Gastrocnemius medialis (tissue), 4 donors: ENCODE measurements at regions of chr1 and their contacts with region 1.

Region 1: DNA sequence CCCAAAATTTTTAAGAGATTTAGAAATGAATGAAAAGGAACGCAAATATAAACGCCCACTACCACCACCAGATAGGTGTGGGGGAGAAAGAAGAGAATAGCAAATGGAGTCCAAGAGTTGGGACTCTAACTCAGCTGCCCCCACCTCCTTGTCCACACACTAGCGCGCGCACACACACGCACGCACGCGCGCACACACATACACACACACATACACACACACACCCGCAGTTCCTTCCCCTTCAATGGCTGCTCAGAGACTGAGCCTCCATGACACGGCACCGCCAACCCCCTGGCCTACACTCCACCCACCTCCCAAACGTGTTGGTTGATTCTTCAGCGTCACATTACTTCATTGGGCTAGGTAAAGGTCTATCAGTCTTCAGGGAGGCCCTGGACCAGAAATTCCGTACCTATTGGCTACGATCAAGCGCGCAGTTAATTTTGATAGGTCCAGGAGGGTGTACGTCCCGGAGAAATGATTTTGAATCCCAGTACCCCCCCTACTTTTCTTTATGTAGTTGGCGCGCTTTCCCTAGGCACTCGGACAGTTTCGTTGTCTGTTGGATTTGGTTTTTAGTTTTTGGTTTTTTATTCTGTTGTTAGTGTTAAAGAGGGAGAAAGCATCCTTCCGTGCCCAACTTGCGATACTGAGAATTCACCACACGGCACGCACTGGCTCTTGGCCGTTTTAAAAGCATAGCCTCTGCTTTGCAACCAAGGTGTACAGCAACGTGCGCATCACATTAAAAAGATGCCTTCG is at the start of gene ANP32E:
- DNase-seq: peak; percentile 97 to 98
- ATAC-seq: peak; percentile 96 to 98
- H3K4me3 ChIP-seq: peak within 1 kb of the TSS; percentile 83 to 89 (median 86)
- H3K27ac ChIP-seq: peak within 1 kb of the TSS; percentile 95 to 99 (median 98)
- H3K4me1 ChIP-seq: peaks cover 4 to 13% of the 10 kb centered on the region in 2 donors
- H3K27me3 ChIP-seq: no peaks in the 10 kb centered on the region
- CTCF ChIP-seq: peak in 4 of 5 experiments; percentile 10 to 25 (median 16)
- POLR2A ChIP-seq: peak; percentile 74 to 89
- total RNA-seq, gene ANP32E: 15.1 to 44.9 (median 24.9) TPM

Region 2: GRCh38 chr1:150056407-150056806 is 179.6 kb before region 1 on chr1:
- in situ Hi-C with region 1: no loop called
- intact Hi-C with region 1: no loop called
- DNase-seq: no peak
- ATAC-seq: no peak
- H3K4me3 ChIP-seq: no peak overlapping the region
- H3K27ac ChIP-seq: no peak overlapping the region
- H3K4me1 ChIP-seq: peaks cover 0 to 4% of the 10 kb centered on the region in 2 donors
- H3K27me3 ChIP-seq: no peaks in the 10 kb centered on the region
- CTCF ChIP-seq: no peak
- POLR2A ChIP-seq: no peak

Region 3: DNA sequence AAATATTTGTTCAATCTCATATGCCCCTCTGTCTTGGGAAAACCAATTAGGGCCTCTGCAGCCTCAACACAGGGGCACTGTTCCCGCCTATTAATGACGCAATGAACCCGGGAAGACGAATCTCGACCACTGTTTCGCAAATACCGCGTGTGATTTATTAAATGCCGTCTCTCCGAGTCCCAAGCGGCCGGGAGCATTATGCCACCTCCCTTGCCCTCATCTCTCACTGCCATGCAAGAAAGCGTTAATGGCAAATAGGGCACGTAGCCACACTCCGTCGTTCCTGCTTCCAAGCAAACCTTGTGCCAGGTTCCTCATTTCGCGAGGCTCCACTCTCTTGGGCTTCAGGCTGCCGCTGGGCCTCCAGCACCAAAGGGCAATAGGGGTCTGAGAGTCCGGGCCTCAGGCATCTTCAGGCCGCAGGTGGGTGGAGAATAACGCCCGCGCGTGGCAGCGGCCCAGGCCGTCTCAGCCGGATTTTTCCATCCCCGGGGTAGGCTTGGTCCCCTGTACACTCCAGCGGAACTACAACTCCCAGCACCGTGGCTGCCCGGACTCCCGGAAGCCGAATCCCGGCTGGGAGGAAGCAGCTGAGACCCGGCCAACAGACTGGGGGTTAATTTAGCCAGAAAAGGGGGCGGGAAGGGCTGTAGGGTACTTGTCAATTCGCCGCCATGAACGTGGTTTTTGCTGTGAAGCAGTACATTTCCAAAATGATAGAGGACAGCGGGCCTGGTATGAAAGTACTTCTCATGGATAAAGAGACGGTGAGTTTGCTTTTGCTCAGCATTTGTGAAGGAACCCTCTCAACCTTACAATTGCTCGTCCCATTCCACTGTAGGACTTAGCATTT is 168.6 kb before region 1 on chr1 and contains the start of gene VPS45:
- in situ Hi-C with region 1: no loop called
- intact Hi-C with region 1: loop called (anchors 5 kb)
- DNase-seq: peak; percentile 85 to 91
- ATAC-seq: peak; percentile 94
- H3K4me3 ChIP-seq: peak within 1 kb of the TSS; percentile 72 to 91 (median 79)
- H3K27ac ChIP-seq: peak within 1 kb of the TSS; percentile 83 to 94 (median 89)
- H3K4me1 ChIP-seq: peaks cover 26% of the 10 kb centered on the region in 2 donors
- H3K27me3 ChIP-seq: no peaks in the 10 kb centered on the region
- CTCF ChIP-seq: peak in 2 of 5 experiments; percentile 9 to 34
- POLR2A ChIP-seq: peak; percentile 29 to 33
- total RNA-seq, gene VPS45: 17.0 to 30.3 (median 24.7) TPM

Region 4: DNA sequence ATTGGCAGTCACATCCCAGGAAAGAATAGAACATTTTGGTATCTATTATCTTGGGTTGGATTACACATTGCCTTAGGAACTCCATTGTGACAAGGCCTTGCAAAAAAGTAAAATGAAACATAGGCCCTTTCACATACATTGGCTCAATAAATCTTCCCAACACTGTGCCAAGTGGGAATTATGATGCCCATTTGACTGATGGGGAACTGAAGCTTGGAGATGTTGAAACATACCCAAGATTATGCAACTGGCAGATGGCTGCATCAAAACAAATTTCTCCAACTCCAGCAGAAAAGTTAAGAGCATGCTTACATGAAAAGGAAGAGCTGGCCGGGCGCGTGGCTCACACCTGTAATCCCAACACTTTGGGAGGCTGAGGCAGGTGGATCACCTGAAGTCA is 59.4 kb before region 1 on chr1:
- in situ Hi-C with region 1: no loop called
- intact Hi-C with region 1: no loop called
- DNase-seq: no peak
- ATAC-seq: no peak
- H3K4me3 ChIP-seq: no peak overlapping the region
- H3K27ac ChIP-seq: no peak overlapping the region
- H3K4me1 ChIP-seq: no peaks in the 10 kb centered on the region
- H3K27me3 ChIP-seq: no peaks in the 10 kb centered on the region
- CTCF ChIP-seq: no peak
- POLR2A ChIP-seq: no peak

Region 5: GRCh38 chr1:150213170-150214098 is 22.6 kb before region 1 on chr1:
- in situ Hi-C with region 1: no loop called
- intact Hi-C with region 1: loop called (anchors 1 kb)
- DNase-seq: peak; percentile 93 to 97
- ATAC-seq: peak; percentile 99 to 100
- H3K4me3 ChIP-seq: peak overlapping the region; percentile 59 to 68 (median 67)
- H3K27ac ChIP-seq: peak overlapping the region; percentile 75 to 88 (median 86)
- H3K4me1 ChIP-seq: peaks cover 5 to 10% of the 10 kb centered on the region in 2 donors
- H3K27me3 ChIP-seq: no peaks in the 10 kb centered on the region
- CTCF ChIP-seq: peak in 2 of 5 experiments; percentile 13 to 26
- POLR2A ChIP-seq: peak; percentile 18 to 49

Region 6: DNA sequence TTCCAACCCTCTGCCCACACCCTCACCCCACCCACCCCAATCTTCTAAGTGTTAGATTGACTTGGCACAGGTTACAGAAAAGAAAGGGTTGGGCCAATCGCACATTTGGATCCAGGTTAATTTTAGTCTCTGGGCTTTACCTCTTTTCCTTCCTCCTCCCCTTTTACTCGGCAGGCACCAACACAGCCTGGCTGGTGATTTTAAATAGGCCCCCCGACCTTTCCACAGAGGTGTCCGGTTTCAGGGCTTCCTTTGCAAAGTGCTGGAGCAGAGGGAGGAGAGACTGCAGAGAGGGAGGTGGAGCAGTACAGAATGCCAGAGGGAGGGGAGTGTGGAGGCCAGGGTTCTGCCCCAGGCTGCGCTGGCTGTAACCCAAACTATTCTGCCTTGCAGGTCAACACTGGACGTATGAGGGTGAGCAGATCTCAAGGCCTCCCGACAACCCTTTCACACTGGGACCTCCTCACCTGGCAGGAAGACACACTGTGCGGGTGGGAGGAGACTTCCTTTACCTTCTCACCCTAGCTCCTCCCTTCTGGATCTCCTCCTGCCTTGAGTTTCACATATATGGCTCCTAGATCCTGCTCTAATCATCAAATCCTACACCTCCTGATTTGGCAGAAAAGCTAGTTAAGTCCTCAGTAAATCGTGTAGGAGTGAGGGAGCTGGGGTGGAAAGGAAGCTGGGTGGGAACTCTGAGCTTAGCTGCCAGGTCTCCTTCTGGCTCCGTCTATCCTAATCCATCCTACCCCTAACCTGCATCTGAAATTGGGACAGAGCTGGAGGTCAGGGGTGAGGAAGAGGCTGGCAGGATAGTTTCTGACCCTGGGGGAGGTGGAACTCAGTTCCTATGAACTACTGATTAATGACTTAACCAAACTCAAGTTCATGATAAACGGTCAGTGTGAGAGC is 24.0 kb after region 1 on chr1:
- in situ Hi-C with region 1: no loop called
- intact Hi-C with region 1: loop called (anchors 2 kb)
- DNase-seq: peak in 1 of 2 donors; percentile 24
- ATAC-seq: peak in 1 of 2 donors; percentile 5
- H3K4me3 ChIP-seq: peak overlapping the region in 1 of 4 donors; percentile 5
- H3K27ac ChIP-seq: peak overlapping the region; percentile 22 to 76 (median 66)
- H3K4me1 ChIP-seq: peaks cover 32 to 48% of the 10 kb centered on the region in 2 donors
- H3K27me3 ChIP-seq: no peaks in the 10 kb centered on the region
- CTCF ChIP-seq: no peak
- POLR2A ChIP-seq: no peak

Region 7: GRCh38 chr1:150268705-150269403 is 32.8 kb after region 1 on chr1 and contains the start of gene APH1A:
- in situ Hi-C with region 1: no loop called
- intact Hi-C with region 1: loop called (anchors 1 kb)
- DNase-seq: peak; percentile 97 to 98
- ATAC-seq: peak; percentile 95 to 96
- H3K4me3 ChIP-seq: peak within 1 kb of the TSS; percentile 69 to 99 (median 94)
- H3K27ac ChIP-seq: peak within 1 kb of the TSS; percentile 94 to 99 (median 98)
- H3K4me1 ChIP-seq: peaks cover 10 to 40% of the 10 kb centered on the region in 2 donors
- H3K27me3 ChIP-seq: no peaks in the 10 kb centered on the region
- CTCF ChIP-seq: no peak
- POLR2A ChIP-seq: peak; percentile 76 to 83
- total RNA-seq, gene APH1A: 41.2 to 63.8 (median 54.9) TPM

Region 8: GRCh38 chr1:150281837-150282653 is 46.0 kb after region 1 on chr1 and contains the start of gene CIART:
- in situ Hi-C with region 1: no loop called
- intact Hi-C with region 1: loop called (anchors 1 kb)
- DNase-seq: peak; percentile 97 to 99
- ATAC-seq: peak; percentile 88 to 91
- H3K4me3 ChIP-seq: peak within 1 kb of the TSS; percentile 59 to 80 (median 72)
- H3K27ac ChIP-seq: peak within 1 kb of the TSS; percentile 93 to 97 (median 95)
- H3K4me1 ChIP-seq: peaks cover 27 to 34% of the 10 kb centered on the region in 2 donors
- H3K27me3 ChIP-seq: no peaks in the 10 kb centered on the region
- CTCF ChIP-seq: no peak
- POLR2A ChIP-seq: peak; percentile 67 to 77
- total RNA-seq, gene CIART: 8.2 to 15.8 (median 11.7) TPM

Region 9: GRCh38 chr1:150363426-150364230 is 127.6 kb after region 1 on chr1 and contains the start of gene RPRD2:
- in situ Hi-C with region 1: no loop called
- intact Hi-C with region 1: loop called (anchors 5 kb)
- DNase-seq: peak; percentile 100
- ATAC-seq: peak; percentile 91 to 93
- H3K4me3 ChIP-seq: peak within 1 kb of the TSS; percentile 82 to 93 (median 84)
- H3K27ac ChIP-seq: peak within 1 kb of the TSS; percentile 93 to 97 (median 96)
- H3K4me1 ChIP-seq: peaks cover 23% of the 10 kb centered on the region in 2 donors
- H3K27me3 ChIP-seq: no peaks in the 10 kb centered on the region
- CTCF ChIP-seq: peak in 1 of 5 experiments; percentile 14
- POLR2A ChIP-seq: peak; percentile 51 to 56
- total RNA-seq, gene RPRD2: 18.0 to 28.0 (median 23.1) TPM